Dendritic cell treated with granulocyte-macrophage colony-stimulating factor and Interleukin-4, amounts not matched to agents 40 ng/mL and 50 ng/mL, for 4 days (primary cell): ENCODE measurements at regions of chr12 and their contacts with region 1.

Region 1: GRCh38 chr12:57983146-57983857 is 41.9 kb downstream of the ATP23 start:
- H3K4me3 Mint-ChIP-seq: no peak overlapping the region
- H3K27ac Mint-ChIP-seq: no peak overlapping the region
- H3K4me1 Mint-ChIP-seq: no peaks in the 10 kb centered on the region
- H3K27me3 Mint-ChIP-seq: no peaks in the 10 kb centered on the region

Region 2: DNA sequence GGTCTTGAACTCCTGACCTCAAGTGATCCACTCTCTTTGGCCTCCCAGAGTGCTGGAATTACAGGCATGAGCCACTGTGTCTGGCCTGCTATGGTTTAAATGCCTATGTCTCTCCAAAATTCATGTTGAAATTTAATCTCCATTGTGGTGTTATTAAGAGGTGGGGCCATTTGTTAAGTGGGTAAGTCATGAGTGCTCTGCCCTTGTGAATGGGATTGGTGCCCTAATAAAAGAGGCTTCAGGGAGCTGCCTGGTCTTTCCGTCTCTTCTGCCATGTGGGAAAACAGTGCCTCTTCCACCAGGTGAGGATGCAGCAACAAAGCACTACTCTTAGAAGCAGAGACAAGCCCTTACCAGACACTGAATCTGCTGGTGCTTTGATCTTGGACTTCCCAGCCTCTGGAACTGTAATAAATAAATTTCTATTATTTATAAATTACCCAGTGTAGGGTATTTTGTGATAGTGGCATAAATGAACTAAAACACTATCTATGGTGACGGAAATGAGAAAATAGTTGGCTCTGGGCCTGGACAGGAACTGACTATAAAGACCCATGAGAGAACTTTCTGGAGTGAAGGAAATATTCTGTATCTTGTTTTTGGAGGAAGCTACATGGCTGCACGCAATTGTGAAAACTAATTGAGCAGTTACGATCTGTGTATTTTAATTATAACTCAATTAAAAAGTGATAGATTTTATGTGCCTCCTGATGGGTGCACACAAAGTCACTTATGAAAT is 54.0 kb before region 1 on chr12:
- intact Hi-C with region 1: no loop called
- H3K4me3 Mint-ChIP-seq: no peak overlapping the region
- H3K27ac Mint-ChIP-seq: no peak overlapping the region
- H3K4me1 Mint-ChIP-seq: peaks cover 2% of the 10 kb centered on the region
- H3K27me3 Mint-ChIP-seq: no peaks in the 10 kb centered on the region

Region 3: GRCh38 chr12:58443273-58443980 is 460.1 kb after region 1 on chr12:
- intact Hi-C with region 1: loop called (anchors 10 kb)
- H3K4me3 Mint-ChIP-seq: no peak overlapping the region
- H3K27ac Mint-ChIP-seq: no peak overlapping the region
- H3K4me1 Mint-ChIP-seq: no peaks in the 10 kb centered on the region
- H3K27me3 Mint-ChIP-seq: no peaks in the 10 kb centered on the region

Region 4: DNA sequence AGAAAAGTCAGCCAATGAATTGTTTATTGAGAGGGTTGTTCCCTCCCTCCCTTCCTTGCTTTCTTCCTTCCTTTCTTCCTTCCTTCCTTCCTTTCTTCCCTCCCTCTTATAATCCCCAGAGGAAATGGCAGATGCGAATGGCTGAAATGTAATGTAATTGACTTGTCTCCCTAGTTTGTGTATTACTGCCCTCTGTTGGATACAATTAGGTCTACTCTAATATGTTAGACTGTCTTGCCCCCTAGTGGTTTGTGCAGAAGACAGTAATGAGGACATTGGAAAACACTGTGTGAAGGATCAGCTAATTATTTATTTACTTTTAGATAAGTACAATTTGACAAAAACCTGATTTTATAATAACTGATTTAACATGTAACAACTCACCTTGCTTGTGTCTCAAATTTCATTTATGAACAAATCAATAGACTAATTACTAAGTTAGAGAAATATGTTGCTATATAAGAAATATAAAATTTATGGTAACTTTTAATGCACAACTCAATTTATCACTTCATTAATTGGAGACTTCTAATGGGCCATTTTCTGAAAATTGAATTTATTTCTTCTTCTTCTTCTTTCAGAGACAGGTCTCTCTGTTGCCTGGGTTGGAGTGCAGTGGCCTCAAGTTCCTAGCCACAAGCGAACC is 1166.8 kb after region 1 on chr12:
- intact Hi-C with region 1: loop called (anchors 5 kb)
- H3K4me3 Mint-ChIP-seq: no peak overlapping the region
- H3K27ac Mint-ChIP-seq: no peak overlapping the region
- H3K4me1 Mint-ChIP-seq: no peaks in the 10 kb centered on the region
- H3K27me3 Mint-ChIP-seq: peaks cover 2% of the 10 kb centered on the region